Heart left ventricle (tissue), 16 donors: ENCODE measurements at regions of chr7 and their contacts with region 1.

Region 1: GRCh38 chr7:43834463-43835251 is 34.7 kb downstream of the MRPS24 start:
- DNase-seq: no peak
- ATAC-seq: peak in 1 of 4 donors; percentile 34
- H3K4me3 ChIP-seq: peak overlapping the region in 9 of 12 donors; percentile 18 to 43 (median 35)
- H3K27ac ChIP-seq: peak overlapping the region in 1 of 12 donors; percentile 46
- H3K4me1 ChIP-seq: peaks cover 0 to 21% (median 0%) of the 10 kb centered on the region in 12 donors
- H3K27me3 ChIP-seq: peaks cover 0 to 5% (median 0%) of the 10 kb centered on the region in 9 donors
- CTCF ChIP-seq: no peak
- POLR2A ChIP-seq: no peak

Region 2: GRCh38 chr7:42931834-42932651 is 902.6 kb before region 1 on chr7 and contains the starts of genes MRPL32 and PSMA2:
- intact Hi-C with region 1: loop called in 1 of 10 experiments (anchors 10 kb)
- DNase-seq: peak; percentile 95 to 97 (median 96)
- ATAC-seq: peak; percentile 100
- H3K4me3 ChIP-seq: peak within 1 kb of the TSS; percentile 61 to 97 (median 72)
- H3K27ac ChIP-seq: peak within 1 kb of the TSS; percentile 16 to 88 (median 80)
- H3K4me1 ChIP-seq: peaks cover 6 to 57% (median 37%) of the 10 kb centered on the region in 12 donors
- H3K27me3 ChIP-seq: no peaks in the 10 kb centered on the region
- CTCF ChIP-seq: no peak
- POLR2A ChIP-seq: peak in 1 of 2 donors; percentile 72
- total RNA-seq, gene MRPL32: 49.0 to 71.7 (median 60.8) TPM
- total RNA-seq, gene PSMA2: 41.8 to 106 (median 75.8) TPM

Region 3: DNA sequence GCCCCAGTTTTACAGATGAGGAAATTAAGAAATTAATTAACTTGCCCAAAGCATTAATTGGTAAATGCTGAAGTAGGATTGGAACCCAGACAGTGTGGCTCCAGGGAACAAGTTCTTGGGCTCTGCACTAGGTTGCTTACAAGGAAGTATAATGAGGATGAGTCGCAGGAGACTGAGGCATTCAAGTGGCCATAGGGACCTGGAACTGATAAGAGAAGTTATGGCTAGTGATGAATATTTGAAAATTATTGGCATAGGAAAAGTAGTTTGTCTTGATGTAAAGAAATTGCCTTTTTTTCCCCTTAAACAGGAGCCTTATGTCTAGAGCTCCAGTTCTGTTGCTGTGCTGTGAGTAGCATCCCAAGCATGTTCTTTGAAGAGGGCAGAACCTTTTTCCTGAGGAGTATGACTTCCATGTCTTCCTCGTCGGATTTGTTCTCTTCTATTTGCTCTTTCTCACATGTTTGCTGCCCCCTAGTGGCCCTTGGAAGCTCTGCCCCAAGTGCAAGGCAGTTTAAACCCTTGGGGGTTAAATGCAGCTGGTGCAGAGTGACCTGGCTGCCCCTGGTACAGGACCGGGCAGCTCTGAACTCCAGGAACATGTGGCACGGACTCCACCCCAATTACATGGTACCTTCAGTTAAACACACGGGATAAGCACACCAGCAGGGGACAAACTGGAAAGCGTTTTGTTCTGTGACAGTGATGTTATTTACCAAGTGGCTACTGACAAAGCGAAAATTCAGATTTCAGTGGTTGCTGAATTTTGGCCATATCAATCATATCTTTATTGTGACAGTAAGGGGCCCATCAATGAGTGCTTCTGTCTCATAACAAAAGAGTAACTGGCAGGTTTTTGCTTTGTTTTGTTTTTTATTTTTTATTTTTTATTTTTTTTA is 573.4 kb before region 1 on chr7:
- intact Hi-C with region 1: loop called in 2 of 10 experiments (anchors 2 to 10 kb)
- DNase-seq: peak in 4 of 5 donors; percentile 33 to 67 (median 60)
- ATAC-seq: peak in 3 of 4 donors; percentile 59 to 80 (median 78)
- H3K4me3 ChIP-seq: no peak overlapping the region
- H3K27ac ChIP-seq: no peak overlapping the region
- H3K4me1 ChIP-seq: peaks cover 0 to 5% (median 0%) of the 10 kb centered on the region in 12 donors
- H3K27me3 ChIP-seq: peaks cover 0 to 17% (median 0%) of the 10 kb centered on the region in 9 donors
- CTCF ChIP-seq: peak; percentile 82 to 94 (median 90)
- POLR2A ChIP-seq: no peak

Region 4: DNA sequence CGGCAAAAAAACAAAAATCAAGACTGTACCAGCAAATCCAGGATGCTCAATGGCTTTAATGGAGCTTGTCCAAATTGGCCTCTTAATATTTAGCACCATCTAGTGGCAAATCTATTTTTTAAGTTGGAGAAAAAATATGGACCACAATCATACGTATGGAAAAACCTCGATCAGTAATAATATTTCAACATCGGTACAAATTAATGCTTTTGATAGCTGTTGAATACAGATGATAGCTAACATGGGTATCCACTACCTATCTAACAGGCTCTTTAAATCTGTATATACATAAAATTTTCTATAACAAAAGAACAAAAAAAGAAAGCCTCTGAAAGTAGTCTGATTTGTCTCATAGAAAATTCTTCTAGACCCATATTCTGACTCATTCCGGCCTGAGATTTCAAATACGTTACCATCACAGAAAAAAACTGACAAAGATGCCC is 134.6 kb before region 1 on chr7:
- intact Hi-C with region 1: loop called in 2 of 10 experiments (anchors 5 to 10 kb)
- DNase-seq: no peak
- ATAC-seq: peak in 3 of 4 donors; percentile 44 to 73 (median 72)
- H3K4me3 ChIP-seq: no peak overlapping the region
- H3K27ac ChIP-seq: no peak overlapping the region
- H3K4me1 ChIP-seq: peaks cover 0 to 19% (median 4%) of the 10 kb centered on the region in 12 donors
- H3K27me3 ChIP-seq: no peaks in the 10 kb centered on the region
- CTCF ChIP-seq: peak; percentile 58 to 90 (median 70)
- POLR2A ChIP-seq: no peak

Region 5: DNA sequence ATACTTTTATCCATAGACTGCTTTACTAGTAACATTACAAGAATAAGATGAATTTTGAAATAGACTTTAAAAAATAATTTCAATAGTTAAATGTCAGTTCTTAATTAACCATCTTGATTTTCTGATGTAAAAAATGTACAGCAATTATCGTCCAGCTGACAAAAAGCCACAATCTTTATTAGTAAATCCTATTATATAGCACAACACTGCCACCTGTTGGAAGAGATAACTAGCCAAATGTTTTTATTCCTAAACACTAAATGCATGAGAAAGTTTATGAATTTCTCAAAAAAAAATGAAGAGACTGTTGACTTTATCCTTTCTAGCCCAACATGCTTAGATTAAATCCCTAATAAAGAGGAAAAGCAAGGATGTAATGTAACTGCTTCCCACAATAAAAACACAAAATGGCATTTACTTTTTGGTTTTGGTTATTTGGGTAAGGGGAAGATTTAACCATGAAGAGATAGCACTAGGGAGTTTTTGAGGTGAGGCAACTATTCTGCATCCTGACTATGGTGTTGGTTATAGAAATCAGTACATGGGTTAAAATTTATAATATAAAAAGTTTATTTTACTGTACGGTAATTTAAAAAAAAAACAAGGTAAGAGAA is 113.4 kb before region 1 on chr7:
- intact Hi-C with region 1: loop called in 9 of 10 experiments (anchors 5 to 10 kb)
- DNase-seq: no peak
- ATAC-seq: no peak
- H3K4me3 ChIP-seq: no peak overlapping the region
- H3K27ac ChIP-seq: no peak overlapping the region
- H3K4me1 ChIP-seq: peaks cover 0 to 18% (median 3%) of the 10 kb centered on the region in 12 donors
- H3K27me3 ChIP-seq: no peaks in the 10 kb centered on the region
- CTCF ChIP-seq: peak; percentile 43 to 78 (median 70)
- POLR2A ChIP-seq: no peak

Region 6: GRCh38 chr7:43729214-43729923 is 105.3 kb before region 1 on chr7 and contains the start of gene COA1:
- intact Hi-C with region 1: loop called in 9 of 10 experiments (anchors 5 to 10 kb)
- DNase-seq: peak; percentile 83 to 91 (median 89)
- ATAC-seq: peak; percentile 98 to 99 (median 99)
- H3K4me3 ChIP-seq: peak within 1 kb of the TSS; percentile 60 to 95 (median 81)
- H3K27ac ChIP-seq: peak within 1 kb of the TSS; percentile 82 to 92 (median 88)
- H3K4me1 ChIP-seq: peaks cover 0 to 42% (median 19%) of the 10 kb centered on the region in 12 donors
- H3K27me3 ChIP-seq: no peaks in the 10 kb centered on the region
- CTCF ChIP-seq: peak in 1 of 12 donors; percentile 19
- POLR2A ChIP-seq: peak in 1 of 2 donors; percentile 57
- total RNA-seq, gene COA1: 57.5 to 81.2 (median 68.2) TPM

Region 7: GRCh38 chr7:43888993-43889945 is 54.6 kb after region 1 on chr7:
- intact Hi-C with region 1: no loop called
- DNase-seq: no peak
- ATAC-seq: peak in 2 of 4 donors; percentile 18 to 36
- H3K4me3 ChIP-seq: no peak overlapping the region
- H3K27ac ChIP-seq: no peak overlapping the region
- H3K4me1 ChIP-seq: peaks cover 0 to 42% (median 21%) of the 10 kb centered on the region in 12 donors
- H3K27me3 ChIP-seq: no peaks in the 10 kb centered on the region
- CTCF ChIP-seq: no peak
- POLR2A ChIP-seq: no peak